ENCODE measurements at regions of chr3 and their contacts with region 1.

Region 1: DNA sequence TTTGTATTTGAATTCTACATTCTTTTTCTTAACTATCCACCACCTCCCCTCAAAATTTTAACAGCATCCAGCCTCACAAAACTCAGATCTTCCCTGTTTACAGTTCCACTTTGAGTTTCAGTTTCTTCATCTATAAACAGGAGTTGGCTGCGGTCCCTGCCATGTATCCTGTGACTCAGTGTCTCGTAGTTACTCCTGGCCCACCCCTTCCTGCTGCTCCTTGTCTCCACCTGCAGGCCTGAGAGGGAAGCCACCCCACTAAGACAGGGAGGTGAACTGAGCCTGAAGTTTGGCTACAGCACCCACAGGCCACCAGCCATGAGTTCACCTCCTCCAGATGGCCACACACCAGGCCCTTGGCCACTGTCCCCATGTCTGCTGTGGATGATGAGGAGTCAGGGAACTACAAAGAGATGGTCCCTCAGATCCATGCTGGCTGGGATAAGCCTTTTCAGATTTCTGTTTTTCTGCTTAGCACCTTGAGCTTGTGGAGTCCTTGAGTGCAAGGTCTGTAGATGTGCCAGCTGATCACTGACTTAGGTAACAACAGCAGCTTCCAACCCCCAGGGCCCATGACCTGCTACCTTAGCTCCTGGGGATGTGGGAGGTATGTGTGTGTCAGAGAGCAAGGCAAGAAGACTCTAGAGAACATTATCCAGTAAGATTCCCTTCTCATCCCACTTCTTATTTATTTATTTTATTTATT is 37.5 kb downstream of the CD86 start:
- DNase-seq: peak; percentile 85
- H3K4me3 Mint-ChIP-seq: peak overlapping the region; percentile 27
- H3K27ac Mint-ChIP-seq: peak overlapping the region; percentile 77
- H3K4me1 Mint-ChIP-seq: peaks cover 28% of the 10 kb centered on the region
- H3K27me3 Mint-ChIP-seq: no peaks in the 10 kb centered on the region

Region 2: DNA sequence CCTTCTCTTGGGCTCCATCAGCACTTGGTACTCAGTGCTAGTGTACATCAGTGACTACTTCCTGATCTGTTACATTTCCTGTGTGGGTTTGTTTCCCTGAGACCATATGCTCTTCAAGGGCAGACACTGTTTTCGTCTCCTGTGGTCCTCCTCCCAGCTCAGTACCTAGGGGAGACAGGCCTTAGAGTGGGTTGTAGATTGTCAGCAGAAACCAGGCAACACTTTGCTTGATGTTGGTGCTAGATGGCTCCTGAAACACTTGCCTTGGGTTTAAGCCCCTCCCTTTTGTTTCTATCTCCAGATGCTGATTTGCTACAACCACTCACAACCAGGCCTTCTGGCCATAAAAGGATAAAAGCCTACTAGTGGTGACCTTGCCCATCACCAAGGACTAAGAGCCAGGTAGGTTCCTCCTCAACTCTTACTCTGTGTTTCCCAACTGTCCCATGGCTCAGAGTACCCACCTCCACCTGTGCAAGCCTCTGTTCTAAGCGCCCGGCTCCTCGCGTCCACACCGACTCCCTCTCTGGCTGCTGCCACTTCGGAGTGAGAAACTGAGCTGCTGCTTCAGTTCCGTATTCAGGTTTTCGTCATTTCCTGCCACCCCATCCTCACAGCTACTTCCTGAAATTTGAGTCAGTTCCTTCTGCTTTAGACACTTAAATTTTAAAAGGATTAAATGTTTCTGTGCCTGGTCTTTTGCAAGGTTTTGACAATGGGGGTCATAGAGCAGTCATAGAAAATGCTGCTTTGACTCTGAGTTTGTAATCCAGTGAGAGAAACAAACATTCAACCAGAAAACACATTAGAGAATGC is 432.0 kb before region 1 on chr3 and contains the start of gene HCLS1:
- intact Hi-C with region 1: loop called (anchors 10 kb)
- DNase-seq: peak; percentile 92
- H3K4me3 Mint-ChIP-seq: peak within 1 kb of the TSS; percentile 91
- H3K27ac Mint-ChIP-seq: peak within 1 kb of the TSS; percentile 97
- H3K4me1 Mint-ChIP-seq: peaks cover 46% of the 10 kb centered on the region
- H3K27me3 Mint-ChIP-seq: no peaks in the 10 kb centered on the region
- total RNA-seq, gene HCLS1: 210 and 216 TPM in 2 replicates

Region 3: DNA sequence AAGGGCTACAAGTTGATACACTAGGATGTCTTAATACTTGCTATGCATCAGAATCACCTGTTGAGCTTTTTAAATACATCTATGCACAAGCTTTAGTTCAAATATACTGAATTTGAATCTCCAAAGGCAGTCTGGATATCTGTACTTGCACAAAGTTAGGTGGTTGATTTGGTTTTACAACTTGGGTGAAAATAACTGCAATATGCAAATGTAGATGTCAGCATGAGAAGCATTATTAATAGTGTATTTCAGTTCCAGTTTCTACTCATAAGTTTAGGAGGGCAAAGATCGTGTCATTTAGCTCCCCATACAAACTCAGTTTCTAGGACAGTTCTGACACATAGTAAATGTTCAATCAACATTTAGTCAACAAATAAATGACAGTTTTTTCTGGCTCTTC is 283.4 kb before region 1 on chr3:
- intact Hi-C with region 1: loop called (anchors 1 kb)
- DNase-seq: no peak
- H3K4me3 Mint-ChIP-seq: no peak overlapping the region
- H3K27ac Mint-ChIP-seq: no peak overlapping the region
- H3K4me1 Mint-ChIP-seq: peaks cover 15% of the 10 kb centered on the region
- H3K27me3 Mint-ChIP-seq: no peaks in the 10 kb centered on the region

Region 4: GRCh38 chr3:121995161-121996137 is 97.2 kb before region 1 on chr3:
- intact Hi-C with region 1: loop called (anchors 5 kb)
- DNase-seq: peak; percentile 70
- H3K4me3 Mint-ChIP-seq: no peak overlapping the region
- H3K27ac Mint-ChIP-seq: peak overlapping the region; percentile 68
- H3K4me1 Mint-ChIP-seq: peaks cover 26% of the 10 kb centered on the region
- H3K27me3 Mint-ChIP-seq: no peaks in the 10 kb centered on the region

Region 5: GRCh38 chr3:122074621-122075265 is 17.9 kb before region 1 on chr3:
- intact Hi-C with region 1: loop called (anchors 1 kb)
- DNase-seq: peak; percentile 78
- H3K4me3 Mint-ChIP-seq: peak overlapping the region; percentile 53
- H3K27ac Mint-ChIP-seq: peak overlapping the region; percentile 76
- H3K4me1 Mint-ChIP-seq: peaks cover 35% of the 10 kb centered on the region
- H3K27me3 Mint-ChIP-seq: no peaks in the 10 kb centered on the region

Measured in activated CD4-positive, alpha-beta T cell treated with anti-CD3 and anti-CD28 coated beads, Interleukin-2, amount 10 ng/mL, durations not matched to agents 24 days and 14 days (primary cell).